ENCODE measurements at regions of chr1 and their contacts with region 1.

Region 1: GRCh38 chr1:226679853-226680516 is 59.1 kb downstream of the ITPKB start:
- DNase-seq: peak; percentile 66 to 90 (median 73)
- H3K4me3 ChIP-seq: peak overlapping the region; percentile 1 to 12
- H3K4me3 Mint-ChIP-seq: peak overlapping the region; percentile 74 to 93 (median 85)
- H3K27ac ChIP-seq: peak overlapping the region; percentile 89
- H3K27ac Mint-ChIP-seq: peak overlapping the region; percentile 94 to 100 (median 99)
- H3K4me1 ChIP-seq: peaks cover 99% of the 10 kb centered on the region
- H3K4me1 Mint-ChIP-seq: peaks cover 95 to 100% (median 98%) of the 10 kb centered on the region in 4 donors
- H3K27me3 ChIP-seq: no peaks in the 10 kb centered on the region
- H3K27me3 Mint-ChIP-seq: peaks cover 0 to 5% of the 10 kb centered on the region in 2 donors

Region 2: GRCh38 chr1:225700164-225700740 is 979.7 kb before region 1 on chr1:
- CTCF ChIA-PET with region 1: no interaction called
- POLR2A ChIA-PET with region 1: no interaction called
- intact Hi-C with region 1: no loop called
- DNase-seq: no peak
- H3K4me3 ChIP-seq: no peak overlapping the region
- H3K4me3 Mint-ChIP-seq: no peak overlapping the region
- H3K27ac ChIP-seq: no peak overlapping the region
- H3K27ac Mint-ChIP-seq: no peak overlapping the region
- H3K4me1 ChIP-seq: no peaks in the 10 kb centered on the region
- H3K4me1 Mint-ChIP-seq: no peaks in the 10 kb centered on the region
- H3K27me3 ChIP-seq: no peaks in the 10 kb centered on the region
- H3K27me3 Mint-ChIP-seq: peaks cover 0 to under 1% of the 10 kb centered on the region in 2 donors

Region 3: DNA sequence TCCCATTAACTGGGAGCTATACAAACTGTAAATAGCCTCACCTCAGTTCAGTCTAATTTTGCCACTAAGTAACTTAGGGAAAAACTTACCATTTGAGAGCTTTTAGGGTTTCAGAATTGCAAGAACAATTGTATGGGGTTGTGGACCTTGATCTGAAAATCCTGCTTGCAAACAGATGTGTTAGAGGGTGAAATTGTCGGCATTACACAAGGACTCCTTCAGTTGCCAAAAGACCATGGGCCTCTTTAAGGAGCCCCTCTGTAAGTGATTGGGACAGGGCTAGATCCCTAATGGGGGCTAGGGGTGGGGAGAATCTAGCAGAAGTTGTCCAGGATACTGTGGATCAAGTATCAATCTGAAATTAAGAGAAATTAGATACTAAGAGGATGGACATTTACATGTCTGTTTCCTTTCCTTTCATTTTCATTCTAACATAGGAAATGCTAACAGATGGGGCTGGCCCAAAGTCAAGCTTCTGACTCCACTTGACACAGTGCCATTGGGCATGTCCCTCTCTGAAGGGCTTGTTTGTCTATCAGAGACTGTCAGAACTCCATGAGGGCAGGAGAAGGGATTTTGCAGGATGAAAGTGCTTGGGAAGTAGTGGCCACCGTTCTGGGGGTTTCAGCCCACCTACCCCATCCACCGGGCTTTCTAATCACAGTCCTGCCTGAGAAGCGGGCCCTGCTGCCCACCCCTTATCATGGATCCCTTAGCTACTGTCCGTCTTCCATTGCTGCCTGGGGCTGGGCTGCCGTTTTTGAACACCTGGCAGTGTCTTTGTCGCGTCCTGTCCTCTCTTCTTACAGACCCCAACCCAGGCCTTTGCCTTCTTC is 76.7 kb before region 1 on chr1:
- CTCF ChIA-PET with region 1: no interaction called
- POLR2A ChIA-PET with region 1: no interaction called
- intact Hi-C with region 1: no loop called
- DNase-seq: no peak
- H3K4me3 ChIP-seq: no peak overlapping the region
- H3K4me3 Mint-ChIP-seq: no peak overlapping the region
- H3K27ac ChIP-seq: no peak overlapping the region
- H3K27ac Mint-ChIP-seq: peak overlapping the region in 1 of 7 donors; percentile 51
- H3K4me1 ChIP-seq: no peaks in the 10 kb centered on the region
- H3K4me1 Mint-ChIP-seq: no peaks in the 10 kb centered on the region
- H3K27me3 ChIP-seq: no peaks in the 10 kb centered on the region
- H3K27me3 Mint-ChIP-seq: peaks cover 0 to 8% of the 10 kb centered on the region in 2 donors

Region 4: GRCh38 chr1:226634166-226634588 is 45.8 kb before region 1 on chr1:
- CTCF ChIA-PET with region 1: interaction called, 80 read pairs
- POLR2A ChIA-PET with region 1: interaction called, 4 read pairs
- intact Hi-C with region 1: loop called (anchors 1 kb)
- DNase-seq: peak; percentile 74 to 81 (median 78)
- H3K4me3 ChIP-seq: no peak overlapping the region
- H3K4me3 Mint-ChIP-seq: peak overlapping the region in 7 of 8 donors; percentile 1 to 82 (median 53)
- H3K27ac ChIP-seq: peak overlapping the region; percentile 56
- H3K27ac Mint-ChIP-seq: peak overlapping the region; percentile 72 to 94 (median 88)
- H3K4me1 ChIP-seq: peaks cover 53% of the 10 kb centered on the region
- H3K4me1 Mint-ChIP-seq: peaks cover 28 to 70% (median 53%) of the 10 kb centered on the region in 4 donors
- H3K27me3 ChIP-seq: no peaks in the 10 kb centered on the region
- H3K27me3 Mint-ChIP-seq: no peaks in the 10 kb centered on the region

Region 5: DNA sequence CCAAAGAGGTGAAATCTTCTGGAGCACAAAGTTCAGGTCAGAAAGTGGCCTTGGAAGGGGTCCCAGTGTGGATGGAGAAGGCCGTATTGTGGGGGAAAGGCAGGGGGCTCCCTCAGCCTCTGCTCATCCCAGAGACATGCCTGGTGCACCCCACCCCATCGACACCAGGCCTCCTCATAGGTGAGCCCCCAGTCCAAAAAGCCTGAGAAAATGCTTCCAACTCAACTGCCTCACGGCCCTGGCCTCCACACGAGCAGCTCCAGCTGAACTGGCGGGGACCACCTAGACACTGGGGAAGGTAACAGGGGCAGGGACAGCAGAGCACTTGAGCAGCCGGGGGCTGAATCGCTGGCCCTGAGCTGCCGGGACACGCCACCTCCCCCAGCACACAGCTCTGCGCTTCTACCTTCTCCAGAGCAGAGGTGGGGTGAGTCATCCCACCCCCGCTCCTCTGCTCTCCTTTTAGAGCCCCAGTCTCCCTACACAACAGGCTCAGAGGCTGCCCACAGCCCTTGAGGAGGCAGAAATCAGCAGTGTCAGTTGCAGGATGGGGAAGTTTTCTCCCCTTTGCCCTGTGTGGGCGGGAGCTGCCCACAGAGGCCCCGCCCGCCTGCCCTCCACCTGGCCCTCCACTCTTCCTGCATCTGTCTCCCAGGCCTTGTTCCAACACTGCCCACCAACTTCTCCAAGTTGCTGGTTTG is 37.0 kb before region 1 on chr1:
- CTCF ChIA-PET with region 1: no interaction called
- POLR2A ChIA-PET with region 1: interaction called, 11 read pairs
- intact Hi-C with region 1: no loop called
- DNase-seq: peak in 1 of 5 donors; percentile 80
- H3K4me3 ChIP-seq: no peak overlapping the region
- H3K4me3 Mint-ChIP-seq: peak overlapping the region in 7 of 8 donors; percentile 26 to 76 (median 62)
- H3K27ac ChIP-seq: peak overlapping the region; percentile 42
- H3K27ac Mint-ChIP-seq: peak overlapping the region in 6 of 7 donors; percentile 87 to 92 (median 90)
- H3K4me1 ChIP-seq: peaks cover 59% of the 10 kb centered on the region
- H3K4me1 Mint-ChIP-seq: peaks cover 30 to 76% (median 48%) of the 10 kb centered on the region in 4 donors
- H3K27me3 ChIP-seq: no peaks in the 10 kb centered on the region
- H3K27me3 Mint-ChIP-seq: no peaks in the 10 kb centered on the region

Region 6: GRCh38 chr1:226649780-226650179 is 30.2 kb before region 1 on chr1:
- CTCF ChIA-PET with region 1: interaction called, 10 read pairs
- POLR2A ChIA-PET with region 1: interaction called, 49 read pairs
- intact Hi-C with region 1: loop called (anchors 1 kb)
- DNase-seq: peak in 3 of 5 donors; percentile 36 to 65 (median 42)
- H3K4me3 ChIP-seq: no peak overlapping the region
- H3K4me3 Mint-ChIP-seq: peak overlapping the region in 2 of 8 donors; percentile 32 to 45
- H3K27ac ChIP-seq: no peak overlapping the region
- H3K27ac Mint-ChIP-seq: peak overlapping the region in 5 of 7 donors; percentile 43 to 84 (median 66)
- H3K4me1 ChIP-seq: peaks cover 34% of the 10 kb centered on the region
- H3K4me1 Mint-ChIP-seq: peaks cover 28 to 61% (median 53%) of the 10 kb centered on the region in 4 donors
- H3K27me3 ChIP-seq: no peaks in the 10 kb centered on the region
- H3K27me3 Mint-ChIP-seq: no peaks in the 10 kb centered on the region

Region 7: GRCh38 chr1:226656601-226657277 is 23.2 kb before region 1 on chr1:
- CTCF ChIA-PET with region 1: interaction called, 28 read pairs
- POLR2A ChIA-PET with region 1: interaction called, 114 read pairs
- intact Hi-C with region 1: no loop called
- DNase-seq: peak; percentile 61 to 85 (median 63)
- H3K4me3 ChIP-seq: peak overlapping the region in 1 of 2 donors; percentile 11
- H3K4me3 Mint-ChIP-seq: peak overlapping the region; percentile 48 to 88 (median 60)
- H3K27ac ChIP-seq: no peak overlapping the region
- H3K27ac Mint-ChIP-seq: peak overlapping the region in 2 of 7 donors; percentile 93 to 97
- H3K4me1 ChIP-seq: no peaks in the 10 kb centered on the region
- H3K4me1 Mint-ChIP-seq: peaks cover 0 to 82% (median 36%) of the 10 kb centered on the region in 4 donors
- H3K27me3 ChIP-seq: no peaks in the 10 kb centered on the region
- H3K27me3 Mint-ChIP-seq: no peaks in the 10 kb centered on the region

Region 8: DNA sequence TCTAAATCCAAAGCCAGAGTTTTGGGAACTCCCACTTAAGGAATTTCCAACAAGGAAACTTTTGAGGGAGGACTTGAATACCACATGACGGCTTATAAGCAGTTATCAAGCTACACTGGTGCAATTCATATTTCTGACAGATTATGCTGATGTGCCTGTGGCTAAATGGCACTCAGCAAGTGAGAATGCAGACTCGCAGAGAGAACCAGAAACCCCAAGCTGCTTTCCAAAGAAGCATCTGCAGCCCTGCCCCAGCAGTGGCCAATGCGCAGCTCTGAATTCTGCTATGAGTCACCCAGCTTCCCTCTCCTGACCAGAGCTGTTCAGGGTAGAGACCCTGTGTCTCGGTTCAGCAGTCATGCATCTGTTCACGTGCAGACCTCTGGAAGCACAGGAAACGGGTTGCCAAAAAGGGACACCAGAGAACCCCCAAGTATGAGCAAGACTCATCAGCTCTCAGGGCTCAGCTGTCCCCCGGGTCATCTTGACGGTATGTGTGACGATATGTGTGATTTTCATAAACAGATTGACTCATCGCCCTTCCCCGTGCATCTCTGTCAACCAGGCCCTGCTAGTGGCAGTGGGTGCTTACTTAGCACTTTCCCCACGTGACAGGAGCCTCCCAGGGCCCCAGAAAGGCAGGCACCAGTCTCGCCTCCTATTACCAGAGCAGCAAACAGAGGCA is 17.2 kb before region 1 on chr1:
- CTCF ChIA-PET with region 1: interaction called, 28 read pairs
- POLR2A ChIA-PET with region 1: interaction called, 114 read pairs
- intact Hi-C with region 1: loop called (anchors 1 kb)
- DNase-seq: peak; percentile 84 to 99 (median 86)
- H3K4me3 ChIP-seq: no peak overlapping the region
- H3K4me3 Mint-ChIP-seq: peak overlapping the region; percentile 57 to 88 (median 76)
- H3K27ac ChIP-seq: peak overlapping the region; percentile 74
- H3K27ac Mint-ChIP-seq: peak overlapping the region in 6 of 7 donors; percentile 96 to 99 (median 97)
- H3K4me1 ChIP-seq: no peaks in the 10 kb centered on the region
- H3K4me1 Mint-ChIP-seq: peaks cover 0 to 90% (median 38%) of the 10 kb centered on the region in 4 donors
- H3K27me3 ChIP-seq: no peaks in the 10 kb centered on the region
- H3K27me3 Mint-ChIP-seq: no peaks in the 10 kb centered on the region

Region 9: GRCh38 chr1:226702957-226703831 is 23.2 kb after region 1 on chr1:
- CTCF ChIA-PET with region 1: interaction called, 7 read pairs
- POLR2A ChIA-PET with region 1: interaction called, 9 read pairs
- intact Hi-C with region 1: loop called (anchors 2 kb)
- DNase-seq: peak; percentile 83 to 89 (median 86)
- H3K4me3 ChIP-seq: peak overlapping the region; percentile 21 to 68
- H3K4me3 Mint-ChIP-seq: peak overlapping the region; percentile 81 to 88 (median 85)
- H3K27ac ChIP-seq: peak overlapping the region; percentile 86
- H3K27ac Mint-ChIP-seq: peak overlapping the region; percentile 88 to 98 (median 96)
- H3K4me1 ChIP-seq: peaks cover 87% of the 10 kb centered on the region
- H3K4me1 Mint-ChIP-seq: peaks cover 59 to 92% (median 81%) of the 10 kb centered on the region in 4 donors
- H3K27me3 ChIP-seq: no peaks in the 10 kb centered on the region
- H3K27me3 Mint-ChIP-seq: no peaks in the 10 kb centered on the region

Measured in CD4-positive, alpha-beta memory T cell (primary cell).